MCF 10A (cell line): ENCODE measurements at regions of chrX and their contacts with region 1.

Region 1: GRCh38 chrX:9988762-9989161 is 21.6 kb downstream of the CLDN34 start:
- DNase-seq: peak; percentile 54
- H3K4me3 Mint-ChIP-seq: no peak overlapping the region
- H3K27ac Mint-ChIP-seq: no peak overlapping the region
- H3K4me1 Mint-ChIP-seq: no peaks in the 10 kb centered on the region
- H3K27me3 Mint-ChIP-seq: peaks cover 11% of the 10 kb centered on the region
- CTCF ChIP-seq: peak; percentile 70

Region 2: GRCh38 chrX:8743126-8743732 is 1245.5 kb before region 1 on chrX:
- CTCF ChIA-PET with region 1: interaction called, 3 read pairs
- POLR2A ChIA-PET with region 1: no interaction called
- intact Hi-C with region 1: loop called (anchors 10 kb)
- DNase-seq: peak; percentile 72
- H3K4me3 Mint-ChIP-seq: no peak overlapping the region
- H3K27ac Mint-ChIP-seq: no peak overlapping the region
- H3K4me1 Mint-ChIP-seq: no peaks in the 10 kb centered on the region
- H3K27me3 Mint-ChIP-seq: no peaks in the 10 kb centered on the region
- CTCF ChIP-seq: peak; percentile 64

Region 3: DNA sequence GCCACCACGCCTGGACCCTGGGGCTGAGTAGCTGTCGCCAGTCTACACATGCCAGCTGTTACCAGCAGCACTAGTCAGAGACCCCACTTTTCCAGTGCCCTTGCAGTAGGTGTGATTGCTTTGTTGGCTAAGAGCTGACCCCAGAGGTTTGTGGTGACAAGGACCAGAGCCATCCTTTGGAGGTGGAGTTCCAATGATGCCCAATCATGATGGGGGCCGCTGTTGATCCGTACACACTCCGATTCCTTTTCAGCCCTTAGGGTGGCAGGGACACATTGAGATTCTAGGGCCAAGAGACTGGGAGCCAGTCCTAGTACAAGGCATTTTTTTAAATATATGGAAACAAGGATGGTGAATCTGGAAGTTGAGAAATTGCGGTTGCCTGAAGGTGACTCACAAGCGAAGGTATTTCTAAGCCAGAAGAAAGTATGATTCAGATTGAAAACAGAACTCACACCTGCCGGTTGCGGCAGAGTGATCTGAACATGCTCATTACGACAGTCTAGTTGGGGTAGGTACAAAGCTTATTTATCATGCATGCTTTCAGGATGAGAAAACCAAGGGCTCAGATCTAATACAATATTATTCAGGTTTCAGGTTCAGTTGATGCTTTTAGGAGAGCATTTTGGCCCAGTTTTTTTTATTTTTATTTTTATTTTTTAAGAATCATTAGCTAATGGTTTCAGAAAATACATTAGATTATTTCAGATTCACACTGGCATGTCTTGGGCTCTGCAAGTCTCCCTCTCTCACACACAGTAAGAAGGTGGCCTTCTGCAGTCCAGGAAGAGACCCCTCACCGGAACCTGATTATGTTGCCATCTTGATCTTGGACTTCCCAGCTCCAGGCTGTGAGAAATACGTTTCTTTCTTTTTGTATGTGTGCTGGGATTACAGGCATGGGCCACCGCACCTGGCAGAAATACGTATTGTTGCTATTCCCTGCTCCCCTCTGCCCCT is 159.2 kb before region 1 on chrX:
- CTCF ChIA-PET with region 1: interaction called, 3 read pairs
- POLR2A ChIA-PET with region 1: no interaction called
- intact Hi-C with region 1: loop called (anchors 5 kb)
- DNase-seq: peak; percentile 97
- H3K4me3 Mint-ChIP-seq: no peak overlapping the region
- H3K27ac Mint-ChIP-seq: peak overlapping the region; percentile 59
- H3K4me1 Mint-ChIP-seq: peaks cover 6% of the 10 kb centered on the region
- H3K27me3 Mint-ChIP-seq: no peaks in the 10 kb centered on the region
- CTCF ChIP-seq: no peak

Region 4: GRCh38 chrX:10111364-10112148 is 122.8 kb after region 1 on chrX:
- CTCF ChIA-PET with region 1: interaction called, 178 read pairs
- POLR2A ChIA-PET with region 1: no interaction called
- intact Hi-C with region 1: no loop called
- DNase-seq: no peak
- H3K4me3 Mint-ChIP-seq: no peak overlapping the region
- H3K27ac Mint-ChIP-seq: no peak overlapping the region
- H3K4me1 Mint-ChIP-seq: peaks cover 6% of the 10 kb centered on the region
- H3K27me3 Mint-ChIP-seq: no peaks in the 10 kb centered on the region
- CTCF ChIP-seq: no peak

Region 5: GRCh38 chrX:10636337-10636736 is 647.6 kb after region 1 on chrX:
- CTCF ChIA-PET with region 1: no interaction called
- POLR2A ChIA-PET with region 1: no interaction called
- intact Hi-C with region 1: loop called (anchors 5 kb)
- DNase-seq: peak; percentile 72
- H3K4me3 Mint-ChIP-seq: peak overlapping the region; percentile 52
- H3K27ac Mint-ChIP-seq: no peak overlapping the region
- H3K4me1 Mint-ChIP-seq: peaks cover 33% of the 10 kb centered on the region
- H3K27me3 Mint-ChIP-seq: peaks cover 20% of the 10 kb centered on the region
- CTCF ChIP-seq: peak; percentile 79